Aorta (tissue), 5 donors: ENCODE measurements at regions of chr16 and their contacts with region 1.

Region 1: DNA sequence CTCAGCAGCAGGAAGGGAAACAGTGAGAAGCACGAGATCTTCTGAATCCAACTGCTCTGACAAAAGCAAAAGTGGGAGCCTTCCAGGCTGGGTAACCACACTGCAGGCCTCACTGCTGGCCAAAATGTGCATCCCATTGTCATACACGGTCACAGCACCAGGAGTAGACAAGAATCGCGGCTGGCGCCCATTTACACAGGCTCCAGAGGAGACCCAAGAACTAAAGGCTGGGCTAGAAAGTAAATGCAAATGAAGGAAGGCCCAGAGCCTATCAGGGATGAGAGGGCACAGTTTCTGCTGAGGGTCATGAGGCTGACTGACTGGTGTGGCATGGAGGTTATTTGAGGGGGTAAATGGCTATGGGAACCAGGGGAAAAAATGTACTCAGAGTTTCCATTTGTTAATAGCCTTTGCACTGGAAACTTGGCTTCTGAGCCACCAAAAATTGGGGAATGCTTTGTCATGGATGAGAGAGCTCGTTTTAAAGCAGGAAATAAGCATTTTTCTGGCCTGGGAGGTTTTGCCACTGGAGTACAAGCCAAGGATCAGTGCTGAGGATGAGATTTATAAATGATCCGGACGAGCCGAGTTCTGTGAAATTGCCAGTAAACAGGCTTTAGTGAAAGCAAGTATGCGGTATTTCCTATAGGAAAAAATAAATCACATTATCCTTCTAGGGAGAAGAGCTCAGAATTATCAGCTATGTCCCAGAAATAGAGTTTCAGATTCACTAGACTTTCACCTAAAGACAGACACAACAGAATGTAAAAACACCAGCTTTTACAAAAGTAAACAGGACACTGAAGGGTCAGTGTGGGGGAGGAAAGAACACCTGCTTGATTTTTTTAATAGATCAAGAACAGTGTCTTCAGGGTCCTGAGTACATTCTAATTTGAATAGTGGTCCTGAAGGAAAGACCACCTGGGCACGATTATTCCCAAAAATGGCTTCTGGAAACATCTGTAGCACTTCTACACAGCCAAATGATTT is 66.9 kb upstream of the GSG1L start:
- DNase-seq: no peak
- ATAC-seq: peak; percentile 81
- H3K4me3 ChIP-seq: no peak overlapping the region
- H3K27ac ChIP-seq: peak overlapping the region; percentile 29 to 56
- H3K4me1 ChIP-seq: no peaks in the 10 kb centered on the region
- H3K27me3 ChIP-seq: no peaks in the 10 kb centered on the region

Region 2: GRCh38 chr16:28181515-28181914 is 51.1 kb after region 1 on chr16:
- intact Hi-C with region 1: loop called in 1 of 2 experiments (anchors 5 kb)
- DNase-seq: no peak
- ATAC-seq: peak; percentile 80
- H3K4me3 ChIP-seq: no peak overlapping the region
- H3K27ac ChIP-seq: no peak overlapping the region
- H3K4me1 ChIP-seq: peaks cover 3 to 20% of the 10 kb centered on the region in 2 donors
- H3K27me3 ChIP-seq: no peaks in the 10 kb centered on the region

Region 3: GRCh38 chr16:28211712-28212534 is 81.5 kb after region 1 on chr16 and contains the start of gene XPO6:
- intact Hi-C with region 1: loop called in 1 of 2 experiments (anchors 5 kb)
- DNase-seq: peak; percentile 97 to 100
- ATAC-seq: peak; percentile 97
- H3K4me3 ChIP-seq: peak within 1 kb of the TSS; percentile 85 to 93
- H3K27ac ChIP-seq: peak within 1 kb of the TSS; percentile 10 to 14
- H3K4me1 ChIP-seq: no peaks in the 10 kb centered on the region
- H3K27me3 ChIP-seq: no peaks in the 10 kb centered on the region
- total RNA-seq, gene XPO6: 88.6 to 103 TPM